ENCODE measurements at regions of chr7 and their contacts with region 1.

Region 1: DNA sequence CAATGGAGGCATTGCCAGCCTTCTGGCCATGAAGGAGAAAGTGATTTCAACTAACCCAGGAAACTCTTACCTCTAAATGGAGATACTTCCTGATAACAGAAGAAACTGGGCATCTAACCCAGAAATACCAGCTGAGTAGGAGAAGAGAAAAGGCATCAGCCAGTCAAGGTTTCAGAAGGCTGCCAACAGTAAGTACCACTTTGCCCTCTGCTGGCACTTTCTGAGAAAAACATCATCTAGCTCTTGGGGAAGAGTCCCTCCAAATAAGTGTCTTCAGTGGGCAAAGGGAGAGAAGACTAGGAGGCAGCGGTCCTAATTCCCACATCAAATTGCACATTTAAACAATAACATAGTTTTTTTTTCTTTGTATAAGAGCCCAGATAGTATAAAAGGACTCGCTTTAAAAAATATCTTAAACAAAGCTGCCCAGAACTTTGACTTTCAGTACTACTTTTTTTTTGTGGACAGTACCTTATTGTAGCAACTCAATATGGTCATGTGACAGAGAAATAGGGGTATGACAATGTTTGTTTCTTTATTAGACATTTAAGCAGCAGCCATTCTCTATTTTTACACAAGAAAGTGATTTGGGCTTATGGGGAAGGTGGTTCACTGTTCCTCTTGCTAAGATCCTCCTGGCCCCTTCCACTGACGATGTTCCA is 157.3 kb downstream of the CTTNBP2 start:
- DNase-seq: peak; percentile 55 to 56
- H3K4me3 ChIP-seq: no peak overlapping the region
- H3K27ac ChIP-seq: no peak overlapping the region
- H3K4me1 ChIP-seq: no peaks in the 10 kb centered on the region
- H3K27me3 ChIP-seq: no peaks in the 10 kb centered on the region
- CTCF ChIP-seq: peak; percentile 72

Region 2: DNA sequence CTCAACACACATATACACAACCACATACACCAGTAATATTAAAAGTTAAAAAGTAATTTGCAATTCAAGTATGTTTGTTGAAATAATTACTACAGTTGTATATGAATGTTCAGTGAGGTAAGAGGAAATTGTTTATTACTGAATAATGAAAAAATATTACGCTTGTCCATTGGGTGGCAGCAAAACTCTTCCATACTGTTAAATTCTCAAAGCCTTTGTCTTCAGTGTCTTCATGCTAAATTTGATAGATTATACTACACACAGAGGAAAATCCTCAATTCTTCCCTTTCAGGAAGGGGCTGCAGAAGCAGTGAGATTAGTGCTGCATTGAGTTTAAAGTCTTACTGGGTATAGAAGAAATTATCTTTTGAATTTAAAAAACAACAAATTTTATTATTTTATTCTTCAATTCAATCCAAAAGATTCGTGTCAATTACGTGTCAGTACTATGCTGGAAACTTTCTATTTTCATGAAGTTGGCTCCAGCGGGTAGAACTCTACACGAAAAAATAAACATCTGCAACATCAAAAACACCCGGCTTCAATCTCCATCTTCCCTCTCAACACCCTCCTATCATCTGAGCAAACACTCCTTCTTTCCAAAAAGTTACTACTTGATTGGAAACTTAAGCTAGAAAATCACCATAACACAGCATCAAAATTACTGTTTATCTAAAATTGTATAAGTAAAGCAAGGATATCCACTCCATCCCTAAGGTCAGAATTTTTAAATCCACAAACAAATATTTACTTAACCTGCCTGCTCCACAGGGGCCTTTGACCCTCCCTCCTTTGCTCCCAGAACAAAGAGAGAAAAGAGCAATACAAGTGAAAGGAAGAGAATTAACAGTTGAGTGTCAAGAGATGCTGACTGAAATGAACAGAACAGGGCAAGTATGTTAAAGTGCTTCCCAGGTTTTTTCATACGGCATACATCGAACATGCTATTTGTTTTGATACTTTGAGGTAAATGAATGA is 1542.6 kb before region 1 on chr7:
- CTCF ChIA-PET with region 1: interaction called, 5 read pairs
- POLR2A ChIA-PET with region 1: no interaction called
- intact Hi-C with region 1: loop called (anchors 2 kb)
- DNase-seq: peak; percentile 26 to 48
- H3K4me3 ChIP-seq: no peak overlapping the region
- H3K27ac ChIP-seq: no peak overlapping the region
- H3K4me1 ChIP-seq: peaks cover 11% of the 10 kb centered on the region; the same call in 1 of the 2 replicates
- H3K27me3 ChIP-seq: no peaks in the 10 kb centered on the region
- CTCF ChIP-seq: peak; percentile 84

Region 3: GRCh38 chr7:117212969-117213877 is 502.7 kb before region 1 on chr7:
- CTCF ChIA-PET with region 1: no interaction called
- POLR2A ChIA-PET with region 1: no interaction called
- intact Hi-C with region 1: loop called (anchors 5 kb)
- DNase-seq: peak in 1 of 2 experiments; percentile 53
- H3K4me3 ChIP-seq: no peak overlapping the region
- H3K27ac ChIP-seq: no peak overlapping the region
- H3K4me1 ChIP-seq: no peaks in the 10 kb centered on the region
- H3K27me3 ChIP-seq: no peaks in the 10 kb centered on the region
- CTCF ChIP-seq: peak; percentile 90

Region 4: DNA sequence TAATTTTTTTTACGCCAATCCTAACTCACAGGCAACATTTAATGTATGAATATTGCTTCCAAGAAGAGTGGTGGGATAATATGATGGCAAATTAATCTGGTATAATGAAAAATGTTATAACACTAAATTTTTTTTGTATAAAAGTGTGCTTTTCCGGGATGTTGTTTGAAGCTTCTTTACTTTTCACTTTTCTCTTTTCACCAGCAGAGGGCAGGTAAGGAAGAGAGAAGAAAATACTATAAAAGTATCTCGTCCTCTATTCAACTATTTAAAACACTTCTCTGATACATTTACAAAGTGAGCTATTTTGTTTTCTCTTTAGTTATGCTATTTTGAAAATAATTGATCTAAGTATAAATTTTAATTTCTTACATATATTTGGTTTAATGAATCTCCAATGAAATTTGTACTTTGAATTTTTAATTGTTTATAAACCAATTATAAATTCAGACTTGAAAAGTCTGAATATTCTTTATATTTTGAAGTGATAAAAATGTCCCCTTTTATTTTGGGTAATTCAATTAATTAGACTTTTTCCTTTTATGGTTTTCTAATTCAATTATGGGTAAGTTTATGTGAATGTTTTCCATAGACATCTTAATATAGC is 256.8 kb before region 1 on chr7:
- CTCF ChIA-PET with region 1: interaction called, 13 read pairs
- POLR2A ChIA-PET with region 1: no interaction called
- intact Hi-C with region 1: loop called (anchors 1 kb)
- DNase-seq: no peak
- H3K4me3 ChIP-seq: no peak overlapping the region
- H3K27ac ChIP-seq: no peak overlapping the region
- H3K4me1 ChIP-seq: no peaks in the 10 kb centered on the region
- H3K27me3 ChIP-seq: no peaks in the 10 kb centered on the region
- CTCF ChIP-seq: peak; percentile 76

Region 5: GRCh38 chr7:118195837-118196474 is 480.0 kb after region 1 on chr7:
- CTCF ChIA-PET with region 1: no interaction called
- POLR2A ChIA-PET with region 1: no interaction called
- intact Hi-C with region 1: loop called (anchors 5 kb)
- DNase-seq: peak; percentile 48 to 49
- H3K4me3 ChIP-seq: no peak overlapping the region
- H3K27ac ChIP-seq: no peak overlapping the region
- H3K4me1 ChIP-seq: no peaks in the 10 kb centered on the region
- H3K27me3 ChIP-seq: no peaks in the 10 kb centered on the region
- CTCF ChIP-seq: peak; percentile 80

Measured in PC-9 (cell line).